ENCODE measurements at regions of chr20 and their contacts with region 1.

Region 1: GRCh38 chr20:44056010-44056698 is 130.8 kb downstream of the JPH2 start:
- DNase-seq: peak; percentile 64
- ATAC-seq: peak; percentile 86

Region 2: DNA sequence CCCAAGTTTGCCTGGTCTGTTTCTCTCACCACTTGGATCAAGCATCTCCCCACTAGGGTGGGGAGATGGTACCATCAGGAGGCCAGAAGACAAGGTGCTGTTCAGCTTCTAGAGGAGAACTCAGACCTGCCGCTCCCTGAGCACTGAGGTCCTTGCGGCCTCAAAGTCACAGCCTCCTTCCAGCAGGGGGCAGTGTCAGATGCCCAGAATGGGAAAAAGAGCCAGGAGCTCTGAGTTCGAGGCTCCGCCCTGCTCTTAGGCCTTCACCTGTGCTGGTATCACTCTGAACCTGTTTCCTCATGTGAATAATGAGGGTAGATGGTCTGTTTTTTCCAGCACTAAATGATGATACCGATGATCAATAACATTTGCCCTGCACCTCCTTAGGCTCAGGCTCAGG is 72.8 kb before region 1 on chr20:
- intact Hi-C with region 1: no loop called
- DNase-seq: no peak
- ATAC-seq: no peak

Region 3: GRCh38 chr20:44074252-44075151 is 18.3 kb after region 1 on chr20:
- intact Hi-C with region 1: no loop called
- DNase-seq: peak; percentile 77
- ATAC-seq: peak; percentile 85

Region 4: GRCh38 chr20:44097521-44098255 is 41.5 kb after region 1 on chr20:
- intact Hi-C with region 1: no loop called
- DNase-seq: no peak
- ATAC-seq: no peak

Region 5: GRCh38 chr20:44193801-44194200 is 137.6 kb after region 1 on chr20:
- intact Hi-C with region 1: loop called (anchors 5 kb)
- DNase-seq: no peak
- ATAC-seq: no peak

Region 6: DNA sequence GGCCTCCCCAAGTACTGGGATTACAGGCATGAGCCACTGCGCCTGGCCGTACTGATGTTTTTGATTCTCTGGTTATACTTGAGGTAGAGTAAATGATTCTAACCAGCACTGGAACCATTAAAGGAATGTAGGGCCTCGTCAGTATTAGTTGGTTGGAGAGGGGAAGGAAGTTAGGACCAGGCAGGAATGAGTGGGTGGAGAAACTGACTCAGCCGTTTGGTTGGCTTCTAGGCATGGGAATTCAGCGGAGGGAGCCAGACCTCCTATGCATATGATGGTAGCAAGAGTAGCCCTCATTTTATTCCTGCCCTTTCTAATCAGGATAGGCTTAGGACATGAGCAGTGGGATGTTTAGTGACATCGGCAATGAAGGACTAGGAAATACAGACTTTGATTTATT is 484.7 kb after region 1 on chr20:
- intact Hi-C with region 1: no loop called
- DNase-seq: no peak
- ATAC-seq: no peak